ENCODE measurements at regions of chrX and their contacts with region 1.

Region 1: GRCh38 chrX:113644426-113644825 is 803.8 kb upstream of the AMOT start:
- DNase-seq: no peak
- H3K4me3 ChIP-seq: no peak overlapping the region
- H3K27ac ChIP-seq: no peak overlapping the region
- H3K4me1 ChIP-seq: no peaks in the 10 kb centered on the region
- H3K27me3 ChIP-seq: no peaks in the 10 kb centered on the region
- CTCF ChIP-seq: no peak

Region 2: GRCh38 chrX:113873049-113873448 is 228.6 kb after region 1 on chrX:
- CTCF ChIA-PET with region 1: no interaction called
- POLR2A ChIA-PET with region 1: no interaction called
- intact Hi-C with region 1: no loop called
- DNase-seq: no peak
- H3K4me3 ChIP-seq: no peak overlapping the region
- H3K27ac ChIP-seq: no peak overlapping the region
- H3K4me1 ChIP-seq: no peaks in the 10 kb centered on the region
- H3K27me3 ChIP-seq: no peaks in the 10 kb centered on the region
- CTCF ChIP-seq: no peak

Region 3: GRCh38 chrX:115602729-115603389 is 1958.4 kb after region 1 on chrX:
- CTCF ChIA-PET with region 1: no interaction called
- POLR2A ChIA-PET with region 1: interaction called, 11 read pairs
- intact Hi-C with region 1: no loop called
- DNase-seq: peak in 1 of 2 experiments; percentile 72
- H3K4me3 ChIP-seq: no peak overlapping the region
- H3K27ac ChIP-seq: peak overlapping the region; percentile 61
- H3K4me1 ChIP-seq: peaks cover 27% of the 10 kb centered on the region
- H3K27me3 ChIP-seq: no peaks in the 10 kb centered on the region
- CTCF ChIP-seq: no peak

Measured in PC-9 (cell line).